Caco-2 (cell line): ENCODE measurements at regions of chr16 and their contacts with region 1.

Region 1: GRCh38 chr16:3134564-3135417 is at the start of gene ZNF213:
- DNase-seq: peak; percentile 94 to 96
- H3K4me3 ChIP-seq: peak within 1 kb of the TSS; percentile 84
- H3K4me3 Mint-ChIP-seq: peak within 1 kb of the TSS; percentile 90
- H3K27ac Mint-ChIP-seq: peak within 1 kb of the TSS; percentile 91
- H3K4me1 ChIP-seq: no peaks in the 10 kb centered on the region
- H3K4me1 Mint-ChIP-seq: peaks cover 1% of the 10 kb centered on the region
- H3K27me3 ChIP-seq: no peaks in the 10 kb centered on the region
- H3K27me3 Mint-ChIP-seq: no peaks in the 10 kb centered on the region
- CTCF ChIP-seq: no peak
- total RNA-seq, gene ZNF213: 5.3 and 5.5 TPM in 2 replicates

Region 2: DNA sequence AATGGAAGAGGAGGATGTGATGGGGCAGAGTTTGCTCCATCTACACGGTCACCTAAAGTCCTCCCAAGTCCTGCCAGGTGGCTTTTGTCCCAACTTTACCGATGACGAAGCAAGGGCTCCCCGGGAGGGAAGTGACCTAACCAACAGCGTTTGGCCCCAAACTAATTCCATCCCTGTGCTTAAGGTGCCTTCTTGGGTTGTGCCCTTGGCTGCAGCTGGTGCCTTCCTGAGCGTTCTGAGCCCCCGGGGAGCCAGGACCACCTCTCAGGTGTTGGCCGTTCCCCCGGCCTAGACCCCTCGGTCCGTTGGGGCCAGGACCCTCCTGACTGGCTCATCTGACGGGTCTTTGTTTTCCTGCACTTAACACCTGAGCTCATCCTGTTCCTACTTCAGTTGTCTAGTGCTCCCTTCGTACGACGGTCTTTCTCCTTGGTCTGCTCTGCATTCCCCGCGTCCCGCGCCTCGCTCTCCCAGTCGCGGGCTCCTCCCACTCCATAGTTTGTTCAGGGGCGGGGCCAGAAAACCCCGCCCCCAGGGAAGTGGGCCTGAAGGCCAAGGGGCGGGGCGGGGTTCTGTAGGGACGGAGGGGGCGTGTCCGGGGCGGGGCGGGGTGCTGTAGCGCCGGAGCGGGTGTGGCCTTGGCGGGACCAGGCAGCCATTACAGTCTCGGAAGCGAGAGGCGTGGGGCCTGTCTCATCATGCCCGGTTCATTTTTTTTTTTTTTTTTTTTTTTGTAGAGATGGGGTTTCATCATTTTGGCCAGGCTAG is 34.9 kb before region 1 on chr16:
- CTCF ChIA-PET with region 1: interaction called, 5 read pairs
- POLR2A ChIA-PET with region 1: interaction called, 3 read pairs
- intact Hi-C with region 1: loop called (anchors 2 kb)
- DNase-seq: peak; percentile 93 to 94
- H3K4me3 ChIP-seq: no peak overlapping the region
- H3K4me3 Mint-ChIP-seq: peak overlapping the region; percentile 67
- H3K27ac Mint-ChIP-seq: peak overlapping the region; percentile 53
- H3K4me1 ChIP-seq: peaks cover 10% of the 10 kb centered on the region
- H3K4me1 Mint-ChIP-seq: peaks cover 14% of the 10 kb centered on the region
- H3K27me3 ChIP-seq: no peaks in the 10 kb centered on the region
- H3K27me3 Mint-ChIP-seq: no peaks in the 10 kb centered on the region
- CTCF ChIP-seq: no peak

Region 3: DNA sequence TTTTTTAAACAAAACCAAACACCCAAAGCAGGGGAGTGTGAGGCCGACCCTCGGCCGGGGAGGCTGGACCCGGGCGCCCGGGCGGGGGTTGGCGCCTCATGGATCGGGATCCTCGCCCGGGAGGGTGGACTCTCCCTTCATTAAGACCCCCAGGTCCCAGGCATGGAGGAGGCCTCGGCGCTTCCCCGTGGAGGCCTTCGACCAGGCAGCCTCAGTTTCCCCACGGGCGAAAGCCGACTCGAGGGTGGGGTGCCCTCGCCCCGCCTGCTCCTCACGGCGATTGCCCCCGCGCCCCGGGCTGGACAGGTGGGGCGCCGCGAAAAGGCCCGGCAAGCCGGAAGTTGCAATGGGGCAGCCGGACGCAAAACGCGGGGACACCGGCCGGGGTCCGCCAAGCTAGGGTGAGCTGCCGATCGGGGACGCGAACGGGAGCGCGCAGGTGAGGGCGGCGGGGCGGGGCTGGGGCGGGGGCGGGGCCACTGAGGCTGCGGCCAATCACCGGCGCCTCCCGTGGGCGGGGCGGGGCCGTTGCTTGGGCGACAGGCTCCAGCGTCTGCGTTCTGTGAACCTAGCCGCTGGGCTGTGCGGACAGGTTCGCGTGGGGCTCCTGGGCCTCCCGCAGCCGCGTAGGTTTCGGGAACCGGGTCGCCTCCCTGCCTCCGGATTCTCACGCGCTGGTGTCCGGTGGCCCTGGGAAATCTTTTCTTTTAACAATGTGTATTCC is 28.4 kb before region 1 on chr16:
- CTCF ChIA-PET with region 1: interaction called, 8 read pairs
- POLR2A ChIA-PET with region 1: interaction called, 12 read pairs
- intact Hi-C with region 1: loop called (anchors 2 kb)
- DNase-seq: peak; percentile 94
- H3K4me3 ChIP-seq: peak overlapping the region; percentile 90
- H3K4me3 Mint-ChIP-seq: peak overlapping the region; percentile 71
- H3K27ac Mint-ChIP-seq: peak overlapping the region; percentile 84
- H3K4me1 ChIP-seq: peaks cover 3% of the 10 kb centered on the region; the same call in 1 of the 2 replicates
- H3K4me1 Mint-ChIP-seq: peaks cover 6% of the 10 kb centered on the region
- H3K27me3 ChIP-seq: no peaks in the 10 kb centered on the region
- H3K27me3 Mint-ChIP-seq: no peaks in the 10 kb centered on the region
- CTCF ChIP-seq: no peak

Region 4: DNA sequence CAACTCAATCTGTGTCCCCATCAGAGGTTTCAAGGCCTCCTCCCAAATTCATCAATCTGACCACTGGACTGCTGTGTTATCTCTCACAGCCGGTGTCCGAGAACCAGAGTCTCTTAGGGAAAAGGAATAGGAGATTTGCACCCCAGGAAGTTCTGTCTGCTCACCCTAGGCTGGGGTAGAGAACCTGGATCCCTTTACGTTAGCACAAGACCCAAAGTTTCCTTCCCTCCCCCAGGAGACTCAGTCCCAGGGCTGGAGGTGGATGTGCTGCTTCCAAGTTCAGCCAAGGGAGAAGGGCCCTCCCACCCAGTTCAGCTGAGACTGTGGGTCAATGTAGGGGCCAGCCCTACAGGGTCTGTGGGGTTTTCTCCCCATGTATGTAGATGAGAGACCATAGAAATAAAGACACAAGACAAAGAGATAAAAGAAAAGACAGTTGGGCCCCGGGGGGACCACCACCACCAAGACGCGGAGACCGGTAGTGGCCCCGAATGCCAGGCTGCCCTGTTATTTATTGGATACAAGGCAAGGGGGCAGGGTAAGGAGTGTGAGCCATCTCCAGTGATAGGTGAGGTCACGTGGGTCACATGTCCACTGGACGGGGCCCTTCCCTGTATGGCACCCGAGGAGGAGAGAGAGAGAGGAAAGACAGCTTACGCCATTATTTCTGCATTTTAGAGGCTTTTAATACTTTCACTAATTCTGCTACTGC is 30.5 kb after region 1 on chr16:
- CTCF ChIA-PET with region 1: interaction called, 7 read pairs
- POLR2A ChIA-PET with region 1: interaction called, 4 read pairs
- intact Hi-C with region 1: loop called (anchors 5 kb)
- DNase-seq: no peak
- H3K4me3 ChIP-seq: no peak overlapping the region
- H3K4me3 Mint-ChIP-seq: peak overlapping the region; percentile 60
- H3K27ac Mint-ChIP-seq: no peak overlapping the region
- H3K4me1 ChIP-seq: 0 out of 2 replicates have a peak, but pooled peaks cover 4% of the 10 kb centered on the region
- H3K4me1 Mint-ChIP-seq: peaks cover 7% of the 10 kb centered on the region
- H3K27me3 ChIP-seq: no peaks in the 10 kb centered on the region
- H3K27me3 Mint-ChIP-seq: no peaks in the 10 kb centered on the region
- CTCF ChIP-seq: no peak

Region 5: DNA sequence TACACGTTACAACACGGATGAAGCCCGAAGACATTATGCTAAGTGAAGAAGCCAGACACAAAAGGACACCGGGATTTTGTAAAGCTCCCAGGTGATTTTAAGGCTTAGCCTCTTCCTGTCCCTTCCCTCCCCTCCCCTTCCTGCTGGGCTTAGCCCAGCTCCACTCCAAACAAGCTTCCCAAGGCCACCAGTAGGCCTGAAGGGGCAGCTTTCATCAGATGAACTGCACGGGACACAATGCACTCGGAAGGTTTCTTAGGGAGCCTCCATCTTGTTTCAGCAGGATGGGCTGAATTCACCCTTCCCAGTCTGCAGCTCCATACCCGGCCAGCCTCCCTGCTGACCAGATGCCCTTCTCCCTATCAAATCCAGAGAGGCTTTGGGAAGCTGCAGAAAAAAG is 111.2 kb after region 1 on chr16:
- CTCF ChIA-PET with region 1: no interaction called
- POLR2A ChIA-PET with region 1: interaction called, 10 read pairs
- intact Hi-C with region 1: no loop called
- DNase-seq: no peak
- H3K4me3 ChIP-seq: no peak overlapping the region
- H3K4me3 Mint-ChIP-seq: no peak overlapping the region
- H3K27ac Mint-ChIP-seq: no peak overlapping the region
- H3K4me1 ChIP-seq: no peaks in the 10 kb centered on the region
- H3K4me1 Mint-ChIP-seq: no peaks in the 10 kb centered on the region
- H3K27me3 ChIP-seq: no peaks in the 10 kb centered on the region; the same call in 1 of the 2 replicates
- H3K27me3 Mint-ChIP-seq: peaks cover 3% of the 10 kb centered on the region
- CTCF ChIP-seq: no peak

Region 6: DNA sequence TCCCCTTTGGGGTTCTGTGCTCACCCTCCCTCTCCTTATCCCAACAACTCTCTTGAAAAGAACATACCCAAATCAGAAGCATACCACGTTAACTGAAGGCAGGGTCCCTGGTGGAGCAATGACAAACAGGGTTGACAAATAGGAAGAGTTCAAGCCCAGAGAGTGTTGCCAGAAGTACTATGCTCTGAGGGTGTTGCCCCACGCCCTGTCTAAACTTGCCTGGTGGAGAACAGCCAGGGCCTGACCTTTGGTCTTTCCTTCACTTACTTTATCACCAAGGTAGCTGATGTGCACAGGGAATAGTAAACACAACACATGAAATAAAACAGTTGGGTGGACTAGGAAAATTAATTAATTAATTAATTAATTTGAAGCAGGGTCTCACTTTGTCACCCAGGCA is 193.9 kb after region 1 on chr16:
- CTCF ChIA-PET with region 1: no interaction called
- POLR2A ChIA-PET with region 1: no interaction called
- intact Hi-C with region 1: no loop called
- DNase-seq: peak; percentile 17 to 38
- H3K4me3 ChIP-seq: no peak overlapping the region
- H3K4me3 Mint-ChIP-seq: no peak overlapping the region
- H3K27ac Mint-ChIP-seq: no peak overlapping the region
- H3K4me1 ChIP-seq: peaks cover 11% of the 10 kb centered on the region
- H3K4me1 Mint-ChIP-seq: peaks cover 14% of the 10 kb centered on the region
- H3K27me3 ChIP-seq: no peaks in the 10 kb centered on the region
- H3K27me3 Mint-ChIP-seq: no peaks in the 10 kb centered on the region
- CTCF ChIP-seq: no peak

Region 7: DNA sequence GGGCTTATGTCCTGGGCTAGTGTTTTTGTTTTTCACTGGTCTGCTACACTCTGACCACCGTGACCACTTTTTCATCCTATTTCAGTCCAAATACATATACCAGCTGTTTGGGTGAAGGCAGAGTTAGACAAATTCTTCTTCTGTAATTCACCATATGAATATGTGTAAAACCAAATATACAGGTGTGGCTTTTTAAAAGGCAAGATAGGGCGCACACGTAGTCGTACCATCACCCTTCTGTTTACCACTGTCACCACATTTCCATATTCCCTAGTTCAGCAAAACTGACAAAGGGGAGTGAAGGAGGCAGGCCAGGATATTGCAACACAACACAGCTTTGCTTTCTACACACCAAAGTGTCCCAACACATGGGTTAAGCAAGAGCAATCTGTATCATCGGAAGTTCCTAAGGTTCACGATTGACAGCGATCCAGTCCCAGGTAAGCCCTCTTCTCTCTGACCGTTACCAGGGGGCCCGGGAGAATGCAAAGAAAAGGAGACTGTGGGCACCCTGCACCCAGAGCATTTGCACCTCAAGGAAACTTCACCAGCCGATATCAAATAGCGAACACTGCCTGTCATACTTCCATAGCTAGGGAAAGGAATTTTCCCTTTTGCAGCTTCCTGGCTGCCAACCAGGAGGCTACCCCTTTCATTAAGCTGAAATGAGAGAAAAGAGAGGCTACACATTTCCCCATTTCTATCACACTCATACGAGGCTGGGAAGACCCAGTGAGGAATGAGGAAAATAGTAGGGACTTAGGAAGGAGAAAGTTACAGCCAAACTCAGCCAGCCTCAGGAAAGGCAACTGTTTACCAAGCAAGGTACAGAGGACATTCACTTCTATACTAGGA is 722.6 kb after region 1 on chr16:
- CTCF ChIA-PET with region 1: no interaction called
- POLR2A ChIA-PET with region 1: no interaction called
- intact Hi-C with region 1: no loop called
- DNase-seq: no peak
- H3K4me3 ChIP-seq: no peak overlapping the region
- H3K4me3 Mint-ChIP-seq: no peak overlapping the region
- H3K27ac Mint-ChIP-seq: no peak overlapping the region
- H3K4me1 ChIP-seq: peaks cover 9% of the 10 kb centered on the region; the same call in 1 of the 2 replicates
- H3K4me1 Mint-ChIP-seq: peaks cover 18% of the 10 kb centered on the region
- H3K27me3 ChIP-seq: no peaks in the 10 kb centered on the region
- H3K27me3 Mint-ChIP-seq: no peaks in the 10 kb centered on the region
- CTCF ChIP-seq: no peak